ENCODE measurements at regions of chr10 and their contacts with region 1.

Region 1: GRCh38 chr10:116796910-116797513 is 52.3 kb upstream of the ENO4 start:
- DNase-seq: peak; percentile 89

Region 2: DNA sequence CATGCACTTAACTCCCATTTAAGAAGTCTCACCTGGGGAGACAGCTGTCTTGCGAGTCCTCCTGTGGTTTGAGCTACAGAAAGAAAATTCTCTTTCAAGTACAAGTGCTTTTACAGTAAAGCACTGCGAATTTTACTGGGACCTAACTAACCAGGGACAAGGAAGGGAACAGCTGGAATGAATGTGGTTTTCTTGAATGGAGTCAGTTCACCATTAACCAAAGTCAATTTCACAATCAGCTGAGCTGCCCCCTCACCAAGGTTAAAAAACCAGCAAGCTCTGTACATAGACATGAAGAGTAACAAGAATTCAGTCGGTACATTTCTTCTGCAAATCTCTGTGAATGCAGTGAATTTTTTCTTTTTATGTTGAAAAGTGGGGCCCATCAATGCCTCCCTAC is 580.3 kb before region 1 on chr10:
- intact Hi-C with region 1: no loop called
- DNase-seq: no peak

Region 3: DNA sequence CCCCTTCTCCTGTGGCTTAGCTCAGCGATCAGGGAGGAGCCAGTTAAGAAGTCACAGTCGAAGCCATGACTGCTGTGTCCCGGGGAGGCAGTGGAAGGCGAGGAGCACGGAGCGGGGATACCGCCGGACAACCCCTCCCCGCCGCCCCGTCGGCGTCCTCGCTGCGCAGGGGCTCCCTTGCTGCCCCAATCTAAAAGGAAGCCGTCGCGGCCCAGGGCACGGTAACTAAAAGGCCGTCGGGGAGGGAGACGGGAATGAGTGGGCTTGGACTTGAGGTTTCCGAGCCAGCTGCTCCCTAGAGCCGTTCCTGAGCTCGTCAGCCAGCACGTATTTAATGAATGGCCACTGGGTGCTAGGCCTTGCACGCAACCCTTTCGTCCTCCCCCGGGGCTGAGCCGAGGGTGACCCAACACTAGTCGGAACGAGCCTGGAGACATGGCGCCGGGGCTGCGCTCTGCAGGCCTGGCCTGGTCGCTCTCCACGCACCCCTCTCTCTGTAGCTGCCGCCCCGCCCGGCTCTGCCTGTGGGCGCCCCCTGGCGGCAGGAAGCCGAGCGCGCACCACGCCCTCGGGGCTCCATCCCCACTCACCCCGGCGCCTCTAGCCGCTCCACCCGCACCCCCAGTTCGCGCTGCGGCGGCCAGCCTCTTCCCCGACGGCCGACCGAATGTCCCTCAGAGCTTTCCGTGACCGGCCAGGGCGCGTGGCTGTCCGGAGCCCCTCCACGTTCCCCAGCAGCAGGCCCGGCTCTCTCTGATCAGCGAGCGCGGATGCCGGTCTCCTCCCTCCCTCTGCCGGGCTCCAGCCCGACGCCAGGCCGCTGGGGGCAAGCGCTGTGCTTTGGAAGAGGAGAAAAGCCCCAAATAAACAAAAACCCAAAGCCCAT is 371.0 kb after region 1 on chr10:
- intact Hi-C with region 1: loop called in 1 of 2 experiments (anchors 5 kb)
- DNase-seq: peak; percentile 88

Region 4: GRCh38 chr10:117174439-117175214 is 377.6 kb after region 1 on chr10:
- intact Hi-C with region 1: loop called (anchors 2 to 5 kb)
- DNase-seq: peak; percentile 85

Measured in posterior vena cava (tissue), 2 donors.